Mammary epithelial cell (primary cell): ENCODE measurements at regions of chr13 and their contacts with region 1.

Region 1: GRCh38 chr13:50801087-50801931 is 42.2 kb downstream of the DLEU7 start:
- DNase-seq: peak; percentile 58
- H3K4me3 ChIP-seq: no peak overlapping the region
- H3K27ac ChIP-seq: no peak overlapping the region
- H3K4me1 ChIP-seq: peaks cover 11% of the 10 kb centered on the region
- H3K27me3 ChIP-seq: no peaks in the 10 kb centered on the region
- CTCF ChIP-seq: peak; percentile 81 to 82

Region 2: DNA sequence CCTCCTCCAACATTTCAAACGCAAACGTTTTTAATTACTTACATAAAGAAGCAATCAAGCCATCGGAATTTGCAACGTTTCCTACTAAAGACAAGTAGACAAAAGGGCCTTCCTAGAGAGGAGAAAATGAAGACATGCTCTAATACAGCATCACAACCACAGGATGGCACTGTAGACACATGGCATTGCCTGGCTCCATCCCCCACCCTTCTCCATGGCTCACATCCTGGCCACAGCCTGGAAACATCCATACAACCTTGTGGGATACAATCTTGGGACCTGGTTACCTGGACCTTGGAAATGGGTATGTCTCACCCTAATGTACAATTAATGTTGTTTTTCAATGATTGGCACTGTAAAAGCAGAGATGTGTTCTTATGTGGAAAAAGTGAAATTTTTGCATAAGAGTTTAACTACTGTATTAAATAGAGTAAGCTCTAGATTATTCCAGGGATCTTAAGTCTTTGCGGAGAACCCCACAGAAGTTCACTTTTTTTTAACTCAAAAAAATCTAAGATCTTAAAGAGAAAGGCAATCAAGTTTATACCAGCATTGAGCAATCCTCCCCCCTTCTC is 1131.5 kb before region 1 on chr13:
- CTCF ChIA-PET with region 1: no interaction called
- dilution Hi-C with region 1: no loop called
- in situ Hi-C with region 1: no loop called
- intact Hi-C with region 1: loop called (anchors 5 kb)
- DNase-seq: peak; percentile 61
- H3K4me3 ChIP-seq: no peak overlapping the region
- H3K27ac ChIP-seq: no peak overlapping the region
- H3K4me1 ChIP-seq: no peaks in the 10 kb centered on the region
- H3K27me3 ChIP-seq: no peaks in the 10 kb centered on the region
- CTCF ChIP-seq: peak; percentile 66 to 80

Region 3: DNA sequence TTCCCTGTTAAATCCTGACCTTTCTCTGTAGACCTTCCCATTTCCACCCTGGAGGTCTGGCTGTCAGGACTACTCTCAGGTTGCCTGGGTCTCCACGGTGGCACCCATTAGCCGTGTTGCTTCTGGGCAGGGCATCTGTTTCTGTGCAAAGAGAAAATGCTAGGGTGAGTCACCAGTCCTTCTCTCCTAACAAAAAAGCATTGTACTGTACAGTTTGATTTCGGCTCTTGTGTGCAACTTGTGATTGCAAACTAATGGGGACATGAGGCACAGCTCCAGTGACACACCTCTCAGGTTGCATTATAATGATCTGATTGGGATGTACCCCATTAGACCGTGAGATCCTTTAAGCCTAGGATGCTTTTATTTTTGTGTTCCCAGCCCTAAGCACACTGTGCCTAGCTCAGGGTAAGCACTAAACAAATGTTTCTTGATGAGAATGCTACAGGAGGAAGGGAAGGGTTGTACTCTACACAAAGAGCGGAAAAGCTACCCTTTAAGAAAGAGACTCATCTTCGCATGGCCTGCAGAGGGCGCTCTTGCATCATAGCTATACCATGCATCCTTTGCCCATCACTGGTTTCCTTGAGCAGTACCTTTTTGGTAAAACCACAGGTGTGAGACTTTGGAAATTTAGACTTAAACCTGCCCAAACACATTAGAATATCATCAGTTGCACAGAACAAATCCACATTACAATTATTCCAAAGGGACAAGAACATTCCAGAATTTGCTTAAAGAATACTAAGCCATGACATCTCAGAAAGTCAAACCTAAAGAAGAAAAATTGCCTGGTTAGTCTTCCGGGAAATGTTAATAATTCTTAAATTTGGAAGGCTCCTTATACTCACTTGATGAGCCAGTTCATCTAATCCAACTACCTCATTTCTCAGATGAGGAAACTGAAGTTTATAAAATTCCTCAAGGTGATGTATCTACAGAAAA is 824.7 kb before region 1 on chr13:
- CTCF ChIA-PET with region 1: no interaction called
- dilution Hi-C with region 1: no loop called
- in situ Hi-C with region 1: loop called (anchors 25 kb)
- intact Hi-C with region 1: loop called (anchors 1 kb)
- DNase-seq: peak; percentile 69
- H3K4me3 ChIP-seq: no peak overlapping the region
- H3K27ac ChIP-seq: peak overlapping the region; percentile 25
- H3K4me1 ChIP-seq: peaks cover 11% of the 10 kb centered on the region
- H3K27me3 ChIP-seq: no peaks in the 10 kb centered on the region
- CTCF ChIP-seq: peak; percentile 92 to 95

Region 4: DNA sequence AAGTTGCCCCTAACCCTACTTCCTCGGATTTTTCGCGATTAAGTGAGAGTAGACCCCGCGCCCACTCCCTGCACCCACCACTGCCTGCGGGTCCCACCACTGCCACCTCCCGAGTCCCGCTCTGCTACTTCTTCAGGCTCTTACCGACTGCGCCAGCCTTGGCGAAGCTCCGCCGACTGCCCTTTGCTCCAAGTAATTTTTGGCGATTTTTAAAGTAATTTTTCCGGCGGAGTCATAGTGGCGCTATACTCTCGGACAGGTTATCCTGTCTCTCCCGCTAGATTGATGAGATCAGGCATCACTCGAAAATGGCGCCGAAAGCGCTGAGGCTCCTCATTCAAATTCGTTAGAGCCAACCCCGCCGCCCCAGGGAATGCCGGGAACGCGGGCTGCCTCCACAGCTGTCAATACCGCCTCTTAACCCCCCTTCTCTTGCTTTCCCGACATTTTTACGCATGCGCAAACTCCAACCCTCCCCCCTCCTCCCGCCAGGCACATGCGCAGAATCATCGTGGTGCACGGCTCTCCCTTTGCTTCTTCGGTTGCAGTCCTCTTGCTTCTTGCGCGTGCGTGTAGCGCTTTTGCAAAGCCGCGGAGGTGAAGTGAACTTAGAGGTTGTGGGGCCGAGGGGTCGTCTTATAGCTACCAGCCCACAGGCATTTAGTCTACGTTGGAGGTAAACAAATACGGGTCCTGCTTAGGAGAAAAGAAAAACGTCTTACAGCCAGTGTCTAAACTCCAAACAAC is 719.5 kb before region 1 on chr13:
- CTCF ChIA-PET with region 1: no interaction called
- dilution Hi-C with region 1: no loop called
- in situ Hi-C with region 1: no loop called
- intact Hi-C with region 1: loop called (anchors 2 kb)
- DNase-seq: peak; percentile 99
- H3K4me3 ChIP-seq: peak overlapping the region; percentile 76 to 99 (median 92)
- H3K27ac ChIP-seq: peak overlapping the region; percentile 90
- H3K4me1 ChIP-seq: no peaks in the 10 kb centered on the region
- H3K27me3 ChIP-seq: no peaks in the 10 kb centered on the region
- CTCF ChIP-seq: peak in 1 of 2 donors; percentile 11

Region 5: DNA sequence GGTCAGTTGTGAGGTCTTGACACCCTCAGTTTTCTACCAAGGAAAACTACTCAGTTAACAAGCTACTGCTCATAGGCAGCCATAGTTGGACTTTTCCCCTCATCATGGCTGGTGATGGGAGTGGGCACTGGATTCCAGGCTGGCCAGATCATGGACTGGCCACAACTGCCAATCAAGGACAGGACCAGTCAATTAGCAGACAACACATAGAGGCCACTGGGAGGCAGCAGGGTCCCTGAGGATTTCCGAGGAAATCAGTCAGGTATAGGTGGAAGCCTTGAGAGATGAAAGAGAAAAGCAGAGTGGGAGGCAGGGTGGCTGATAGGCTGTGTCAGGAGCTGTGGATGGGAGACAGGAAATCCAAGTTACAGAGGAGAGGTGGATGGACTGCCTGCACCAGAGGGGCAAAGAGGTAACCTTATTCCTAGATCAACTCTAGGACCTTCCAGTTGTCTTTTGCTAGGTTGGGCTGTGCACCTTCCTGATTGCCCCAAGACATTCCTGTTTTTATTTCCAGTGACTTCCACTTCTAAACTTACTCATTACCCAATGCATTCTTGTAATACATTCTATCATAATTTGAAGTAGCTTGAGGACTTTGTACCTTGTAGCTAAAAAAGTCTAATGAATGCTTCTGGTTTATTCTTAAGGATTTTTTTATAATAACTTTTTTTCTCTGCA is 424.3 kb before region 1 on chr13:
- CTCF ChIA-PET with region 1: no interaction called
- dilution Hi-C with region 1: loop called (anchors 25 kb)
- in situ Hi-C with region 1: no loop called
- intact Hi-C with region 1: loop called (anchors 1 kb)
- DNase-seq: no peak
- H3K4me3 ChIP-seq: no peak overlapping the region
- H3K27ac ChIP-seq: no peak overlapping the region
- H3K4me1 ChIP-seq: no peaks in the 10 kb centered on the region
- H3K27me3 ChIP-seq: no peaks in the 10 kb centered on the region
- CTCF ChIP-seq: peak; percentile 15 to 49

Region 6: DNA sequence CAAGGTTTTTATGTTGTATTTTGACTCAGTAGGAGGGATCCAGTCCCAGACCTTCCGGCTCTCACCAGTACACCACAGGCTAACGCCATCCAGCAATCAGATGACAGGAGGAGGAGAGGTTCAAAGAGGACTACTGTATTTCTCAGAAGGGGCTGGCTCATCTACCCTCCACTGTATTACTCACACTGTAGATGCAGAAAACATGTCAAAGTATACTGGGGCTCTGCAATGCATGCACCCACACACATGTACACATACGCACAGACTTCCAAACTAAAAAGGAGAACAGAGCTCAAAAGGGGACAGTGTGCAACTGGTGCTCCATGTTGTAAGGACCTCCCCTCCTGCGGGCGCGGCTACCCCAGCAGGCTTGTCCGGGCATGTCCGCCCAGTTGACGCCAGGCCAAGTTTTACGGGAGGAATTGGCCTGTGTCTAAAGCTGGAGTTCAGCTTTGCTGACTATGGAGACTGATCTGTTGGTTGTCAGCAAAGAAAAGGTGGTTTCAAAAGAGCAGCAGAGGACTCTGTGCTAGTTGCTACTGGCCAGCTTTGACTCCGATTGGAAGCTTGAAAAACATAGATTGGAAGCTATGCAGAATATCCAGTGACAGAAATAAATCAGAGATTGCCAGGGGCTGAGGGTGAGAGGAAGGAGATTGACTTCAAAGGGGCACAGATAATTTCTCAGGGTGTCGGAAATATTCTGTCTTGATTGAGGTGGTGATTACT is 272.0 kb before region 1 on chr13:
- CTCF ChIA-PET with region 1: no interaction called
- dilution Hi-C with region 1: no loop called
- in situ Hi-C with region 1: no loop called
- intact Hi-C with region 1: loop called (anchors 1 kb)
- DNase-seq: peak; percentile 86
- H3K4me3 ChIP-seq: no peak overlapping the region
- H3K27ac ChIP-seq: peak overlapping the region; percentile 54
- H3K4me1 ChIP-seq: peaks cover 18% of the 10 kb centered on the region
- H3K27me3 ChIP-seq: no peaks in the 10 kb centered on the region
- CTCF ChIP-seq: no peak

Region 7: DNA sequence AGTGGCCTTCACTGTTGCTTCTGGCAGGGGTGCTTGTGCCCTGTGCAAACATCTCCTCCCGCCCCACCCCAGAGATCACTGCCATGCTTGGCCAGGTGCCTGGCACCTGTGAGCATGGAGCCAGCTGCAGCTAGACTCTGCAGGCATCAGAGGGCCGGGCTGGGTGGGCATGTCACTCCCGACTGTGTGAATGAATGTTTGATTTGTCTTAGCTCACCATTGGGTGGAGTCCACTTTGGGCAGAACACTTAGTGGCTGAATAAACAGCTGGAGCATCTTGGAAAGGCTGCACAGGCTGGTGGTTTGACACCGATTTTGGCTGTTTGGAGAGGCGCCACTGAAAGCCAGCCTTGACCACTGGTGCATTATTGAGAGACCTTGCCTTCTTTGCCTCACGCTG is 225.2 kb before region 1 on chr13:
- CTCF ChIA-PET with region 1: no interaction called
- dilution Hi-C with region 1: no loop called
- in situ Hi-C with region 1: no loop called
- intact Hi-C with region 1: no loop called
- DNase-seq: no peak
- H3K4me3 ChIP-seq: no peak overlapping the region
- H3K27ac ChIP-seq: no peak overlapping the region
- H3K4me1 ChIP-seq: no peaks in the 10 kb centered on the region
- H3K27me3 ChIP-seq: peaks cover 3% of the 10 kb centered on the region
- CTCF ChIP-seq: no peak

Region 8: GRCh38 chr13:50911937-50912795 is 110.9 kb after region 1 on chr13:
- CTCF ChIA-PET with region 1: interaction called, 4 read pairs
- dilution Hi-C with region 1: no loop called
- in situ Hi-C with region 1: no loop called
- intact Hi-C with region 1: loop called (anchors 1 kb)
- DNase-seq: peak; percentile 65
- H3K4me3 ChIP-seq: no peak overlapping the region
- H3K27ac ChIP-seq: no peak overlapping the region
- H3K4me1 ChIP-seq: peaks cover 22% of the 10 kb centered on the region
- H3K27me3 ChIP-seq: no peaks in the 10 kb centered on the region
- CTCF ChIP-seq: peak; percentile 86 to 93